ENCODE measurements at regions of chr19 and their contacts with region 1.

Region 1: GRCh38 chr19:28324275-28325060 is 888.5 kb downstream of the UQCRFS1 start:
- DNase-seq: no peak
- ATAC-seq: no peak

Region 2: DNA sequence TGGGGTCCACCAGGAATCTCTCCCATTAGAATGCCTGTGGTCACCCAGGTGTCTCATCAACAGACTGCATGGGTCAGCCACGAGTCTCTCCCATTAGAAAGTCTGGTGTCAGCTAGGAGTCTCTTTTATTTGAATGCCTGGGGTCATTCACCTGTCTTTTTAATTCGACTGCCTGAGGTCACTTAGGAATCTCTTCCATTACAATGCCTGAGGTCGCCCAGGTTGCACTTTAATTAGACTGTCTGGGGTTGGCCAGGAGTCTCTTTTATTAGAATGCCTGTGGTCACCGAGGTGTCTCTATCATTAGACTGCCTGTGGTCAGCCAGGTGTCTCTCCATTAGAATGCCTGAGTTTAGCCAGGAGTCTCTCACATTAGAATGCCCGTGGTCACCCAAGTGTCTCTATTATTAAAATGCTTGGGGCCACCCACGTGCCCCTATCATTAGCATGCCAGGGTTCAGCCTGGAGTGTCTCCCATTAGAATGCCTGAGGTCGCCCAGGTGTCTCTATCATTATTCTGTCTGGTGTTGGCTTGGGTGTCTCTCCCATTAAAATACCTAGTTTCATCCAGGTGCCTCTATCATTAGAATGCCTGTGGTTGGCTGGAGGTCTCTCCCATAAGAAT is 585.8 kb before region 1 on chr19:
- intact Hi-C with region 1: no loop called
- DNase-seq: no peak
- ATAC-seq: no peak

Region 3: DNA sequence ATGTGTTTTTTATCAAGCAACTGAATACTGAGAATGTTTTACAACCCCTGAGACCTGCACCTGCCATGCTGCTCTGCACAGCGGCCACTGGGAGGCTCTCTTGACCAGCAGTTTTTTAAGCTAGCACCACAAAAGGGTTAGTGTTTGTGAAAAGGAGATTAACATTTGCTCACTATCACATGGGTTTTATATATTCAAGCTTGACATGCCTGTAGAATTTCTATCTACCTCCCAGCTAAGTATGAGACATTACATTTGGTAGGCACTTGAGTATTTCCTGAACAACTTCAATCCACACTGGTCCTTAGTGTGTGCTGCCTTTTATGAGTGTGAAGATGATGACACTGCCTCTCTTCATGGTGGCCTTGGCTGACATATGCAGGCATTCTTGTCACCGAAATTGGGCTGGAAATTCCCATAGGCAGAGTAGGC is 350.4 kb before region 1 on chr19:
- intact Hi-C with region 1: loop called (anchors 2 kb)
- DNase-seq: no peak
- ATAC-seq: no peak

Region 4: DNA sequence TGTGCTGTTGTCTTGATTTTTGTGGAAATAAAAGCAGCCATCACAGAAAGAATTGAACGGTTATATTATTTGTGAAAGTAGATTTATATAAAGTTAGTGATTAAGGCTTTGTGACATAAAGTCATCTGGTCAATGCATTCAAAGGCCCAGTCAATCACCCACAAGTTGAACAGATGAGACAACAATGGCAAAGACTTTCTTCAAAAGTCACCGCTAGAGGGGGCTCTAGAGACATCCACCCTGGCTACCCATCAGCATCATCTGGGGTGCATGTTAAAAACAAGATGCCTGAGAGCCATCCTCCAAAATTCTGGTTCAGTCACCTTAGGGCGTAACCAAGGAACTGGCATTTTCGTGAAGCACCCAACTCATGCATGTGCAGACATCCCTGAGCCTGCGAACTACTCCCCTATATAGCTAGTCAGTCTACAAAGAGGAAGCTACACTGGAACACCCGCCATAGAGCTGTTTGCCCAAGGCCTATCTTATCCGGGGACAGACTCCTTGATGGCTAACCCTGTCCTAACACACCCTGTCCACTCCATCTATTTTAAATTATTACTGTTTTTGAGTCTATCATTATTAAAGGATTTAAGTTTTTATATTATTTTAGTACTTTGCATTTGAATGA is 82.1 kb before region 1 on chr19:
- intact Hi-C with region 1: loop called (anchors 2 kb)
- DNase-seq: no peak
- ATAC-seq: no peak

Region 5: GRCh38 chr19:28289295-28290063 is 35.0 kb before region 1 on chr19:
- intact Hi-C with region 1: no loop called
- DNase-seq: no peak
- ATAC-seq: no peak

Region 6: DNA sequence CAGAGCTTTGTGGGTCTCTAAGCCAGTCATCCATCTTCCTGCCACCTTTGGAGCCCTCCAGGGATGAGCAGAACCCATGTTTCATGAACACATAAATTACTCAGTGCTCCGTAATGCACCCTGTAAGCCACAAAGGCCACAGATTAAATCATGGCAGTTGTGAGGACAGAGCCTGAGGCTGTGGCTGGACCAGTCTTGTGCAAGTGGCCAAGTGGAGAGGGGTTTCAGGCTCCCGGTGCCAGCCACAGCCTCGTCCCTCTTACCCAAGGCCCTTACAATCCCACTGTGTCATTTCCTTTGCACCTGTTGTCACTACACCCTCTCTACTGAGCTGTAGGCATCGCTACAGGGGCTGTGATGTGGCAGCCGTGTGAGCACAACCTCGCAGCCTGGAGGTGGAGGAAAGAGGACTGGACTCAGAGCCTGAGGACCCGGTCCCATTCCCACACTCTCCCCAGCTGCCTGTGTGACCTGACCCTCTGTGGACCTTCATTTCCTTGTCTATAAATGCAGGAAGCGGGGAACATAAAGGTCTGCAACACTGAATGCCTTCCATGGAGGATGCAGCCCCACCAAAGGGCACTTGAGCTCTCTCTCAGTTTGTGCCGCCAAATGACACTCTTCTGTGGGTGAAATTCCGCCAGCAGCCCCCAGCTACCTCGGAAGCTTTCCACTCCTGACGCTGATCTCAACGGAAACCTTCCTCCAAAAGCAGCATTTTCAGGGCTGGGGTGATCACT is 96.5 kb after region 1 on chr19:
- intact Hi-C with region 1: no loop called
- DNase-seq: no peak
- ATAC-seq: no peak

Measured in Right ventricle myocardium inferior (tissue), 1 donor.